Common myeloid progenitor, CD34-positive (primary cell): ENCODE measurements at regions of chr1 and their contacts with region 1.

Region 1: GRCh38 chr1:202315576-202316168 is 26.1 kb downstream of the UBE2T start:
- DNase-seq: peak; percentile 78 to 86 (median 81)
- H3K4me3 ChIP-seq: no peak overlapping the region
- H3K27ac ChIP-seq: no peak overlapping the region
- H3K4me1 ChIP-seq: peaks cover 0 to 6% (median 0%) of the 10 kb centered on the region in 4 experiments
- H3K27me3 ChIP-seq: peaks cover 0 to 20% (median 9%) of the 10 kb centered on the region in 5 experiments

Region 2: DNA sequence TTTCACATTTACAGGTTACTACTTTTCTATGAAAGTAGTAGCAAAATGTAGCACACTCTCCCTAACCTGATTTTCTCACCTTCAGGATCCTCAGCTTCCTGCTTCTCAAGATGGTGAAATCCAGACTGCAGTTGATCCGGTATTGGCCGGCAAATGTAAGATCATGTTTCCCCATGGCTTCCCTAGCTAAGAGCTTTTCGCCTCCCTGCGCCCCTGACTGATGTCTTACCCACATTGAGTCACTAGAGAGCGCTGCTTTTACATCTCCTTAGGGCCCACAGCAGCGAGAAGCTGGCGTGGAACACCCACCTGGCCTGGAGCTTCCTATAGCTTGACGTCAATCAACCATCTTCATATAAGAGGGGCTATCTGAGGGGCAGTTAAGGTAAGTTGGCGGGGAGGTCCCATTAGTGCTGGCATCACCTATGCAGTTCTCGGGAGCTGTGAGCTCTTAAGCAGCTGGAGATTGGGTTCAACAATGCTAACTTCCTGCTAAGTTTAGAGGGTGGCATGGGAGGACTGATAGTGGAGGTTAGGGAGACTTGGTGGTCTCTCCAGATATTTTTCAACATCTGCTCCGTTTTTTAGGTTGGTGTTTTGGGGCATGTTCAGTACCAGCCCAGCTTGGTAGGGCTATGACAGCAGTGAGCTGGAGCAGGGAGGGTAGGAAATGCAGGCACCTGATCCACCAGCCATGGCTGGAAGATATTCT is 160.8 kb before region 1 on chr1:
- CTCF ChIA-PET with region 1: interaction called, 11 read pairs
- POLR2A ChIA-PET with region 1: no interaction called
- DNase-seq: peak; percentile 56 to 75 (median 71)
- H3K4me3 ChIP-seq: no peak overlapping the region
- H3K27ac ChIP-seq: no peak overlapping the region
- H3K4me1 ChIP-seq: peaks cover 3 to 53% (median 46%) of the 10 kb centered on the region in 4 experiments
- H3K27me3 ChIP-seq: no peaks in the 10 kb centered on the region

Region 3: DNA sequence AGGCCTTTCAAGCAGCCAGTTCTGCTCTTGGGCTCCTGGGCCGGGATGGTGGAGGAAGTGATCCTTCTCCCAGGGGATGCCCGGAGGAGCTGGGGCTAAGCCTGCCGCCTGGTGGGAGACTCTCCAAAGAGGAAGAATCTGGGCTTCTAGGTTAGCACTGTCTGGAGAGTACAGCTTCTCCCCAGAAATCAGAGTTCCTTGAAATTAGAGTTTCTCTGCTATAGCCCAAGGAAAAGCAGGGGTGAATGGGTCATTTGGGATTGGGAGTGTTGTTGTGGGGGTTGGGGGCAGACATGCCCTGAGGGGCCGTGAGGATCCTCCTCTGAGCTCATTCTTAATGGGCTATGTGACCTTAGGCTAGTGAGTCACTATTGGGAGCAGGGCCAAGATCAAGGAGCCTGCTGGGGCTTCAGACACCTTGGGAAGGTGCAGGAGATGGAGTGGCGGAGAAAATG is 115.5 kb before region 1 on chr1:
- CTCF ChIA-PET with region 1: interaction called, 11 read pairs
- POLR2A ChIA-PET with region 1: no interaction called
- DNase-seq: no peak
- H3K4me3 ChIP-seq: no peak overlapping the region
- H3K27ac ChIP-seq: no peak overlapping the region
- H3K4me1 ChIP-seq: peaks cover 0 to 52% (median 14%) of the 10 kb centered on the region in 4 experiments
- H3K27me3 ChIP-seq: peaks cover 0 to 11% (median 3%) of the 10 kb centered on the region in 5 experiments

Region 4: GRCh38 chr1:202274611-202275010 is 41.1 kb before region 1 on chr1:
- CTCF ChIA-PET with region 1: interaction called, 47 read pairs
- POLR2A ChIA-PET with region 1: no interaction called
- DNase-seq: peak; percentile 43 to 59 (median 51)
- H3K4me3 ChIP-seq: no peak overlapping the region
- H3K27ac ChIP-seq: no peak overlapping the region
- H3K4me1 ChIP-seq: peaks cover 0 to 3% (median 0%) of the 10 kb centered on the region in 4 experiments
- H3K27me3 ChIP-seq: peaks cover 0 to 24% (median 9%) of the 10 kb centered on the region in 5 experiments

Region 5: GRCh38 chr1:202304375-202304774 is 11.3 kb before region 1 on chr1:
- CTCF ChIA-PET with region 1: interaction called, 29 read pairs
- POLR2A ChIA-PET with region 1: no interaction called
- DNase-seq: no peak
- H3K4me3 ChIP-seq: no peak overlapping the region
- H3K27ac ChIP-seq: no peak overlapping the region
- H3K4me1 ChIP-seq: peaks cover 0 to 3% (median 0%) of the 10 kb centered on the region in 4 experiments
- H3K27me3 ChIP-seq: peaks cover 0 to 14% (median 0%) of the 10 kb centered on the region in 5 experiments